Activated CD4-positive, alpha-beta T cell treated with anti-CD3 and anti-CD28 coated beads for 36 hours (primary cell): ENCODE measurements at regions of chr2 and their contacts with region 1.

Region 1: DNA sequence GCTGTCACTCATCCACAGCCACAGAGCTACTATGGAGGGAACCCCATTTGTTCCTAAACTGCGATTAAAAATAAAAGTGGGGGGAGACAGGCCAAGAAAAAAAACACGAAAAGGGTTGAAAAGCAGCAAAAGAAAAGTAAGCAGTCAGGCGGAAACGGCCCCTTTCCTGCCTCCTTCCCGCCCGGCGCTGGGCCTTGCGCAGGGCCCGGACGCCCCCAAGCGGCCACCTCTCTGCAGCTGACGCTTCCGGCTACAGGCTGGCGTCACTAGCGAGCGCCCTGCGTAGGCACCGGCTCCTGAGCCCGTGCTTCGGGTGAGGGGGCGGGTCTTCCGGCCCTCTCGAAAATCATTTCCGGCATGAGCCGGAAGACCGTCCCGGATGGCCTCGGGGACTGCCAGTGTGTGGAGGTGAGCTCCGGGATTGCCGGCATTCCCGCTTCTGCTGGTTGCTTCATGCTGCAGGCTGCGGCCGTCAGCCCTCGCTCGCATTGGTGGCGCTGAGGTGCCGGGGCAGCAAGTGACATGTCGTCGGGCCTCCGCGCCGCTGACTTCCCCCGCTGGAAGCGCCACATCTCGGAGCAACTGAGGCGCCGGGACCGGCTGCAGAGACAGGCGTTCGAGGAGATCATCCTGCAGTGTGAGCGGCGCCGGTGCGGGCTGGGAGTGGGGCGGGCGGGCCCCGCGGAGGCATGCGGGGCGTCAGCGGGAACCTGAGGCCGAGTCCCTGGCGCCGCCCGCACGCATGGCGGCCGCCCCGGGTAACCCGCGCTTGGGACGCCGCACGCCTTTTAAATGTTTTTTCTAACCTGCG is at the start of gene ATG16L1:
- DNase-seq: peak; percentile 98
- ATAC-seq: peak; percentile 82
- H3K4me3 Mint-ChIP-seq: peak within 1 kb of the TSS; percentile 85
- H3K27ac Mint-ChIP-seq: peak within 1 kb of the TSS; percentile 98
- H3K4me1 Mint-ChIP-seq: peaks cover 66% of the 10 kb centered on the region
- H3K27me3 Mint-ChIP-seq: no peaks in the 10 kb centered on the region
- total RNA-seq, gene ATG16L1: 23.0 to 24.6 TPM

Region 2: DNA sequence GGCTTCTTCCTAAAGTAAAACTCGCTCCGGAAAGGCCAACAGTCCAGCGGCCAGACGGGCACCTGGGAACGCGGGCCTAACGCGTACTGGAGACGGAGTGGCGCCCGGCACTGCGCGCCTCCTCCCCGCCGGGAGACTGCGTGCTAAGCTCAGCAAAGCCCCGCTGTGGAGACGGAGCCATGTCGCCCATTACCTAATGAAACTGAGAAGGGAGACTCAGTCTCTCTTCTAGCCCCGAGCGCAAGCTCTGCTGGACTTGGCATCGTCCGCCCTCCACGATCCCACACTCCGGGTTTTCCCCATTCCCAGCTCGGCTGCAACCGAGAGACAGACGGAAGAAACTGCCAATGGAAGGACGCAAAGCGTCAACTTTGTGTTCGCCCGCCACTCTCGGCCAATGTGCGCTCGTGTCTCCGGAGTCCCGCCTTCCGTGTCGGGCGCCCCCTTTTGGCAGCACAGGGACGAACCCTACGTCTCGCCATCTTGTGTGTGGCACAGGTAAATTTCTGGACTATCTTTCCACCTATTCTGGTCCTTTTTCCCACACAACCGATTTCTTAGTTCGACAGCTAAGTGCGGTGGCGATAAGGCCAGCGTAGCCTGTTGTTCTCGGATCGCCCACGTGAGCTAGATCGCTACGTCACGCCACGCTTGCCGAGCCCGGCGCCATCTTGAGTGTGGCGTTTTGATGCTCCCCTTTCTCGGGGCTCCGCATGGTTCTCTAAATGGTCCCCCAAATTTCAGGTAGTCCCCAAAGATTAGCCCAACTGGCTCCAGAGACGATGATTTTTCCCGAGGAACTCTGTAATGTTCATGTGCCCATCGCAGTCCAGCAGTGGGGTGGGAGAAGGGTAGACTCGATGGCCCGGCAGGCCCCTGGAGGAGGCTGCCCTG is 1544.5 kb before region 1 on chr2:
- CTCF ChIA-PET with region 1: no interaction called
- POLR2A ChIA-PET with region 1: no interaction called
- intact Hi-C with region 1: loop called in 1 of 2 experiments (anchors 5 kb)
- DNase-seq: peak; percentile 99
- ATAC-seq: peak; percentile 59
- H3K4me3 Mint-ChIP-seq: peak overlapping the region; percentile 85
- H3K27ac Mint-ChIP-seq: peak overlapping the region; percentile 100
- H3K4me1 Mint-ChIP-seq: peaks cover 15% of the 10 kb centered on the region
- H3K27me3 Mint-ChIP-seq: peaks cover 2% of the 10 kb centered on the region

Region 3: DNA sequence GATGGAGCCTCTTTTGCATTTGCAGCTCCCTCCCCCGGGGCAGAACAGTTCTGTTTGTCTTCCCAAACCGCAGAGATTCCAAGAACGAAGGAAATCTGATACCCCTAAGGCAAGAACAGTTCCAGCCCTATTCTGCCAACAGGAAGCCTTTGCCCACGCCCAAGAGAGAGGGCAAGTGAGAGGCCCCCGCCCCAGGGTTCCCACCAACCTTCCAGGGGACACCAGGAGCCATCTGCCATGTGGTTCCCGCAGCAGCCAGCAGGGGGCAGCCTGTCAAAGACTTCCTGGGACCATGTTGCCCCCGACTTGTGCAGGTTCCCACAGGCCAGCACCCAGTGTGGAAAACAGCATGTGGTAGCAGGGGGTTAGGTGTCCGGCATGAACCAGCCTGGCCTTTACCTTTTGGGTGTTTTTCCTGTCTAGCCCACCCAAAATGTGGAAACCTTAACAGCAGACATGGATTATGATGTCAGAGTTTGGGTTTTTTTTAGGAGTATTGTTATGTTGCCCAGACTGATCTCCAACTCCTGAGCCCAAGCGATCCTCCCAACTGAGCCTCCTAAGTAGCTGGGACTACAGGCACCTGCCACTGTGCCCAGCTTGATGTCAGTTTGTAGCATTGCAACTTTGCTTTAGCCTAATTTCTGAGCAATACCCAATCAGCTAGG is 639.8 kb before region 1 on chr2:
- CTCF ChIA-PET with region 1: no interaction called
- POLR2A ChIA-PET with region 1: no interaction called
- intact Hi-C with region 1: loop called (anchors 1 kb)
- DNase-seq: peak; percentile 84
- ATAC-seq: peak; percentile 80
- H3K4me3 Mint-ChIP-seq: no peak overlapping the region
- H3K27ac Mint-ChIP-seq: no peak overlapping the region
- H3K4me1 Mint-ChIP-seq: no peaks in the 10 kb centered on the region
- H3K27me3 Mint-ChIP-seq: no peaks in the 10 kb centered on the region

Region 4: GRCh38 chr2:232750135-232750671 is 501.3 kb before region 1 on chr2:
- CTCF ChIA-PET with region 1: no interaction called
- POLR2A ChIA-PET with region 1: no interaction called
- intact Hi-C with region 1: no loop called
- DNase-seq: no peak
- ATAC-seq: no peak
- H3K4me3 Mint-ChIP-seq: no peak overlapping the region
- H3K27ac Mint-ChIP-seq: no peak overlapping the region
- H3K4me1 Mint-ChIP-seq: peaks cover 19% of the 10 kb centered on the region
- H3K27me3 Mint-ChIP-seq: no peaks in the 10 kb centered on the region

Region 5: DNA sequence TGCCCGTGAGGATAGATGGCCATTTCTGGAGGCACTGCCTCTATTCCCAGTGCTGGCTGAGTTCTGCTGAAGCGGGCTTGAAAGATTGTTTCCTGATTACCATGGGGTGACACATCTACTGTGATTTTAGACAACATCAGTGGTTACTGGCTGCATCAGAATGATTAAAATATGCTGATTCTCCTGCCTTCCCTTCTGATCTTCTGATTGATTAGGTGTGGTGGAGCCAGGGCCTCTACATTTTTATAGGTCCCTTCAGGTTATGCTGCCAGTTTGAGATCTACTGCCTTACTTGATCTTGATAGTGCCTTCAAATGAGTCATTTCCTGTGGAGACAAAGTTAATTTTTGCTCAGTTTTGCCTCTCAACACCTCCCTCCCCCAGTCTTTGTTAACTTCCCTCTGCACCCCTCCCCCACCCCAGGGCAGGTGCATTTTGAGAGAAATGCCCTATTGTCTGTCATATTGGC is 413.1 kb before region 1 on chr2:
- CTCF ChIA-PET with region 1: no interaction called
- POLR2A ChIA-PET with region 1: no interaction called
- intact Hi-C with region 1: loop called in 1 of 2 experiments (anchors 1 kb)
- DNase-seq: peak; percentile 76
- ATAC-seq: peak; percentile 94
- H3K4me3 Mint-ChIP-seq: peak overlapping the region; percentile 15
- H3K27ac Mint-ChIP-seq: peak overlapping the region; percentile 84
- H3K4me1 Mint-ChIP-seq: peaks cover 24% of the 10 kb centered on the region
- H3K27me3 Mint-ChIP-seq: no peaks in the 10 kb centered on the region

Region 6: DNA sequence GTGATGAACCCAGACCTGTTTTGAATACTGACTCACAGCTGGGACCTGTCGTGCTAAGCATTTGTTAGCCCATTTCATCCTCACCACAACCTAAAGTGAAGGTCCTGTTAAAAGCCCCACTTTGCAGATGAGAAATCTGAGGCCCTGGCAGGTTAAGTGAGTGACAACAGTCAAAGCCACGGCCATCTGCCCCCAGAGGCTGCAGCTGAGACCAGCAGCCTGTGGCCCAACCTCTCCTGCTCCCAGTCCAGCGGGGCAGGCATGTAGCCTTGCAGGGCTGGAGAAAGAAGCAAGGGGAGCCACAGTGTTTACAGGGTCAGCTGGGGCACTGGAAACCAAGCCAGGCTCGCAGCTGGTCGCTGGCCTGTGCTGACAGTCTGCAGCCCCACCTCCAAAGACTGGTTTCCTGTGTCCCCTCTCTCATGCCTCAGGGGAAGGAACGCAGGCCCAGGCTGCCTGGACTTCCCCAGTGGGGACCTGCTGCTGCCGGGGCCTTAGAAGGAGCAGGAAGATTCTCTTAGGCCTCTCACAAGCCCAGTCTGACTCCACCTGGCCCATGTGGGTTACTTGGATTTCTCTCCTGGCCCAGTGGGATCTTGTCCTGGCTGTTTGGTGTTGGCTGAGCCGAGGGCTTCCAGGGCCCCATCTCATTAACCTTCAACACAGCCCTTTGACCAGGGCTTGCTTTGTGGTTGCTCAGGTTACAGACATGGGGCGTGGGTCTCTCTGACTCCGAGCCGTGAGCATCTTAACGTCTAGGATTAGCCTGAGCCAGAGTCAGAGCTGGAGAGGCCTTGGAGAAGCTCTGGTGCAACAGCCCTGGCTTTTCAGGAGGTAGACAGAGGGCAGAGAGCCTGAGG is 189.7 kb before region 1 on chr2:
- CTCF ChIA-PET with region 1: interaction called, 5 read pairs
- POLR2A ChIA-PET with region 1: interaction called, 4 read pairs
- intact Hi-C with region 1: loop called (anchors 1 to 2 kb)
- DNase-seq: peak; percentile 70
- ATAC-seq: peak; percentile 51
- H3K4me3 Mint-ChIP-seq: peak overlapping the region; percentile 96
- H3K27ac Mint-ChIP-seq: peak overlapping the region; percentile 90
- H3K4me1 Mint-ChIP-seq: peaks cover 40% of the 10 kb centered on the region
- H3K27me3 Mint-ChIP-seq: no peaks in the 10 kb centered on the region

Region 7: DNA sequence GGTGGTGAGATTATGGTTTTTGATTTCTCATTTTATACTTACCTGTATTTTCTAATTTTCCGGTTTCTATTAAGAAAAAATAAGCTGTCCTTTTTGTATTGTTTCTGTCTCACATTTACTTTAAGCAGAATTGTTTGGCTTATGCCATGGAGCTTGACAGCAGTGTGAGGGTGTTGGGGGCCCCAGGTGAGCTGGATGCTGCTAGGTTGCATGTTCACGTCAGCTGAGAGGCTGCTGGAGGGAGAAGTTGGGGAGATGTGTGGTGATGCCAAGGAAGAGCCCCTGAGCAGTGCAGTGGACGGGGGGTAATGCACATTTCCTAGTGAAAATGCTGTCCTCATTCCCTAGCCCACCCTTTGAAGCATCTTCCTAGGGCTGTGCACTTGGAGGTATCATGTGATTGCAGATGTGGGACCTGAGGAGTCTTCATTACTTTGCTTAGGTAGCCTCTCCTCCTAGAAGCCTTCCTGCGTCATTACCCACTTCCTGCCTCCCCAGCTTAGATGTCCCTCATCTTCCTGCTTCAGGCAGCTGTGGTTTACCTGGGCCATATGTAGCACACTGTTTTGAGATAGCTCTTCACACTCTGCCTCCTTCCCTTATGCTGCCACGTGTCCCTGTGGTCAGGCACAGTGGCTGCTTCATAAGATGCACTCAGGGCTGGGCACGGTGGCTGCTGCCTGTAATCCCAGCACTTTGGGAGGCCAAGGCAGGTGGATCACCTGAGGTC is 16.2 kb after region 1 on chr2:
- CTCF ChIA-PET with region 1: interaction called, 19 read pairs
- POLR2A ChIA-PET with region 1: interaction called, 4 read pairs
- intact Hi-C with region 1: loop called (anchors 1 kb)
- DNase-seq: peak; percentile 85
- ATAC-seq: peak; percentile 95
- H3K4me3 Mint-ChIP-seq: peak overlapping the region; percentile 53
- H3K27ac Mint-ChIP-seq: peak overlapping the region; percentile 98
- H3K4me1 Mint-ChIP-seq: peaks cover 66% of the 10 kb centered on the region
- H3K27me3 Mint-ChIP-seq: no peaks in the 10 kb centered on the region

Region 8: DNA sequence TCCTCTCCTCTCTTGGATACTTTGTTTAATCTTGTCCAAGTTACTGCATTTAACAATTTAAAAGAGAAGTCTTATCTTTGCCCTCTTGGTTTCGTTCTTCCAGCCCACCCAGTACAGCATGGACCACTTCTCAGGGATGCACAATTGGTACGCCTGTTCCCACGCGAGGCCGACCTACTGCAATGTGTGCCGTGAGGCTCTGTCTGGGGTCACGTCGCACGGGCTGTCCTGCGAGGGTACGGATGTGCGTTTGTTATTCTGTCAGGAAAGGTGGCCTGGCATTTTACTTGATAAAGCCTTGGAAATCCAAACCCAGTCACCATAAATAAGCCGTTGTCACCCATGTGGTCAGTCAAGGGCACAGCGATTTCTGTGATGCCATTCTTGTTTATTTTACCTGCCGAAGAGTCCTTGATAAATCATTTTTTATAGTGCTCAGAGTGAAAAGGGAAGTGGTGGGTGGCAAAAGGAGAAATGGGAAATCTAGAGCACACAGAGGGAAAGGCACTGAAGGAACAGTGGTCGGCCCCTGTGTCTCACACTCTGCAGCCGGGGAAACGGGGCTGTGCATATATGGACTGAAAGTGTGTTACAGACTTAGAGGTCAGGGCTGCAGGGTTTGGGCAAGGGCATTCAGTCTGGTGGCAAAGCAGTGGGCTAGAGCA is 183.3 kb after region 1 on chr2:
- CTCF ChIA-PET with region 1: no interaction called
- POLR2A ChIA-PET with region 1: no interaction called
- intact Hi-C with region 1: no loop called
- DNase-seq: no peak
- ATAC-seq: no peak
- H3K4me3 Mint-ChIP-seq: no peak overlapping the region
- H3K27ac Mint-ChIP-seq: no peak overlapping the region
- H3K4me1 Mint-ChIP-seq: peaks cover 13% of the 10 kb centered on the region
- H3K27me3 Mint-ChIP-seq: no peaks in the 10 kb centered on the region